ENCODE measurements at regions of chr3 and their contacts with region 1.

Region 1: GRCh38 chr3:50227390-50228183 is 8.4 kb upstream of the GNAI2 start:
- DNase-seq: peak; percentile 93
- ATAC-seq: peak; percentile 93

Region 2: GRCh38 chr3:50192689-50193141 is 34.9 kb before region 1 on chr3:
- intact Hi-C with region 1: loop called (anchors 1 to 5 kb)
- DNase-seq: peak; percentile 65
- ATAC-seq: peak in 1 of 2 donors; percentile 35

Region 3: GRCh38 chr3:50245831-50246516 is 18.4 kb after region 1 on chr3:
- intact Hi-C with region 1: loop called in 1 of 2 experiments (anchors 2 kb)
- DNase-seq: peak; percentile 93
- ATAC-seq: peak; percentile 78 to 85